Activated naive CD4-positive, alpha-beta T cell treated with anti-CD3 and anti-CD28 coated beads for 36 hours (primary cell): ENCODE measurements at regions of chr17 and their contacts with region 1.

Region 1: GRCh38 chr17:40113110-40113906 is 8.5 kb upstream of the MSL1 start:
- DNase-seq: peak; percentile 98
- H3K4me3 Mint-ChIP-seq: peak overlapping the region; percentile 81
- H3K27ac Mint-ChIP-seq: peak overlapping the region; percentile 91
- H3K4me1 Mint-ChIP-seq: peaks cover 52% of the 10 kb centered on the region
- H3K27me3 Mint-ChIP-seq: no peaks in the 10 kb centered on the region

Region 2: DNA sequence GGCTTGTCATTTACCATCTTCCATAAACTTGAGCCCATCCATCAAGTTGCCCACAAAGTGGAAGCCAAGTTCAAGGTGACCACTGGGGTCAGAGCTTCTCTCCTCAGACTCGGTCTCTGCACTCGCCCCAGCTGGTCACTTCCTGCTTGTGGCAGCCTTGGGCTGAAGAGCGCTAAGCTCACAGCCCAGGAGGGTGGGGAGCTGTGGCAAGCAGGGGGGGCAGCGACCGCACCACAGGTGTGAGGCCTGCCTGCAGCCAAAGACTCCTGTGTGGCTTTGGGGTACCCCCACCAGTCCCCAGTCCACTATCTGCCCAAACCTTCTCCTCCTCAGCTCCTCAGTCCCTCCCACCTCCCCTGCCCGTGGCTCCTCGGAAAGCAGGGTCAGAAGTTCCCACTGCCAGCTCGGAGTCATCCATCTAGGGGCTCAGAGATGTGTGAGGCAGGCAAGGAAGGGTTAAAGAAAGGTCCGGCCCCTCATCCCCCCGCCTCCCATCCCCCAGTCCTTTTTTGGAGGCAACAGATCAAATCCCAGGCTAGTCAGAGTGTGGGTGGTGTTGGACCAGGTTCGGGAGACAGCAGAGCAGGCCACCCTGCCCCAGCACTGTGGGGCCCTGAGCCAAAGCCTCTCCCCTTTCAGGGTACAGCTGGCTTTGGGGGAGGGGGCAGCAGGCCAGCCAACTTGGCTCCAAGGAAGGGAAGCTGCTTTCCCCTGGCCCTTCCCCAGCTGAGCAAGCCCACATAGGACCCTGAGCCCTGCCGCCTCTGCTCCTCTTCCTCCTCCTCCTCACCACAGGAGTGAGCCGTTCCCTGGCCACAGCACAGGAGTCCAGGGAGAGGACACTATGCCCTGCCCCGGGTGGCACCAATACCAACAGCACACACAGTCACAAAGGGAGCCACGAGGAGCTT is 94.8 kb before region 1 on chr17:
- CTCF ChIA-PET with region 1: interaction called, 73 read pairs
- intact Hi-C with region 1: loop called (anchors 1 kb)
- DNase-seq: no peak
- H3K4me3 Mint-ChIP-seq: no peak overlapping the region
- H3K27ac Mint-ChIP-seq: no peak overlapping the region
- H3K4me1 Mint-ChIP-seq: peaks cover 4% of the 10 kb centered on the region
- H3K27me3 Mint-ChIP-seq: no peaks in the 10 kb centered on the region

Region 3: GRCh38 chr17:40075201-40075941 is 37.9 kb before region 1 on chr17:
- CTCF ChIA-PET with region 1: interaction called, 63 read pairs
- intact Hi-C with region 1: no loop called
- DNase-seq: peak; percentile 80
- H3K4me3 Mint-ChIP-seq: no peak overlapping the region
- H3K27ac Mint-ChIP-seq: no peak overlapping the region
- H3K4me1 Mint-ChIP-seq: peaks cover 36% of the 10 kb centered on the region
- H3K27me3 Mint-ChIP-seq: no peaks in the 10 kb centered on the region

Region 4: DNA sequence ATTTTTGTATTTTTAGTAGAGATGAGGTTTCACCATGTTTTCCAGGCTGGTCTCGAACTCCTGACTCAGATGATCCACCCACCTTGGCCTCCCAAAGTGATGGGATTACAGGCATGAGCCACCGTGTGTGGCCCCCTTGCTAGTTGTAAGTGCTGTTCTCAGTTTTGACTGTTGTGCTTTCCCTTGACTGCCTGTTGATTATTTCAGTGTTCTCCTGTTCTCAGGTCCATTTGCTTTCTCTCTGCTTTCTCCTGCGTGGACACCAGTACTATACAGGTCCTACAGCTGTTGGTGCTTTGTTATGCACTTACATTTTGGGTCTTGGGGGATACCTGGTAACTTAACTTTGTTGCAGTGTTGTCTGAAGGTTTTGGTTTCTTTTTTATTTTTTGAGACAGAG is 35.2 kb after region 1 on chr17:
- CTCF ChIA-PET with region 1: interaction called, 31 read pairs
- intact Hi-C with region 1: loop called (anchors 5 kb)
- DNase-seq: no peak
- H3K4me3 Mint-ChIP-seq: no peak overlapping the region
- H3K27ac Mint-ChIP-seq: peak overlapping the region; percentile 31
- H3K4me1 Mint-ChIP-seq: peaks cover 52% of the 10 kb centered on the region
- H3K27me3 Mint-ChIP-seq: no peaks in the 10 kb centered on the region

Region 5: DNA sequence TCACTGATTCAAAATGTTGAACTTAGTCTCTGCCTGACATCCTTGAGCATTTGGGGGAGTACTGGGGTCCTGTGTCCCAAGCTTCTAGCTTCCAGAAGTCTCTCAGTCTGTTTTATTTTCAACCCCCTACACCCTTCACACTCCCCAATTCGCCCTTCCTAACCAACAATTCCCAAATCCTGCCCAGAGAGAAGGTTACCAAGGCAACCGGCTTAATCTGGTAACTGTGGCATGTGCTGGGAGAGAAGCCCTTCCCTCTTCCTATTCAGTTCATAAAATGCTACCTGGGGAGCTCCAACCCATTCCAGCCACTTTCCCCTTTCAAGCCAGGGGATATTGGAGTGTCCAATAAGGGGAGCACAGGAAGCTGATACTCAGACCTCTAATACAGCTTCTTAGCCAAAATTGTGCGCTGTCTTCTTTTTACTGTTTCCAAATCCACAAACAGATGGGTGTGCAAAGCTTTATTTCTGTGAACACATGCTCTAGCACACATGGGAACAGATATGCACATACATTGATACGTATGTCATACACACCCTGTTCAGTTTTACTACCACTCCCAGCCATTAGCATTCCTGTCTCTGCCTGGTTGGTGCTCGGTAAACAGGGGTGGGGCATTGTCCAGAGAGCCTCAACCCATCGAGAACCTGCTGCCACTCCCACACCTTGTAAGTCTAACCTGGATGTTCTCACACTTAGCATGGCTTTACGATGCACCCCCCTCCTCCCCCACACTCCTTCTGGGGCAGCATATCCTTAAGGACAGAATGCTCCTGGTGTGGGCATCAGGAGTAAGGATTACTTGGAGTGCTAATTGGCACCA is 62.8 kb after region 1 on chr17:
- CTCF ChIA-PET with region 1: interaction called, 116 read pairs
- intact Hi-C with region 1: no loop called
- DNase-seq: no peak
- H3K4me3 Mint-ChIP-seq: no peak overlapping the region
- H3K27ac Mint-ChIP-seq: no peak overlapping the region
- H3K4me1 Mint-ChIP-seq: peaks cover 10% of the 10 kb centered on the region
- H3K27me3 Mint-ChIP-seq: no peaks in the 10 kb centered on the region

Region 6: GRCh38 chr17:40287494-40288369 is 174.4 kb after region 1 on chr17 and contains the start of gene CDC6:
- CTCF ChIA-PET with region 1: interaction called, 4 read pairs
- intact Hi-C with region 1: loop called (anchors 1 kb)
- DNase-seq: peak; percentile 100
- H3K4me3 Mint-ChIP-seq: peak within 1 kb of the TSS; percentile 99
- H3K27ac Mint-ChIP-seq: peak within 1 kb of the TSS; percentile 94
- H3K4me1 Mint-ChIP-seq: peaks cover 47% of the 10 kb centered on the region
- H3K27me3 Mint-ChIP-seq: no peaks in the 10 kb centered on the region
- total RNA-seq, gene CDC6: 86.5 to 90.4 TPM